Vagina (tissue), 2 donors: ENCODE measurements at regions of chr16 and their contacts with region 1.

Region 1: GRCh38 chr16:26102369-26102768 is 410.6 kb downstream of the HS3ST4 start:
- DNase-seq: no peak
- H3K4me3 ChIP-seq: no peak overlapping the region
- H3K27ac ChIP-seq: no peak overlapping the region
- H3K4me1 ChIP-seq: no peaks in the 10 kb centered on the region
- H3K27me3 ChIP-seq: no peaks in the 10 kb centered on the region
- CTCF ChIP-seq: no peak
- POLR2A ChIP-seq: no peak

Region 2: GRCh38 chr16:26118575-26118974 is 16.2 kb after region 1 on chr16:
- intact Hi-C with region 1: no loop called
- DNase-seq: no peak
- H3K4me3 ChIP-seq: no peak overlapping the region
- H3K27ac ChIP-seq: no peak overlapping the region
- H3K4me1 ChIP-seq: no peaks in the 10 kb centered on the region
- H3K27me3 ChIP-seq: no peaks in the 10 kb centered on the region
- CTCF ChIP-seq: no peak
- POLR2A ChIP-seq: no peak

Region 3: GRCh38 chr16:26157319-26157718 is 55.0 kb after region 1 on chr16:
- intact Hi-C with region 1: loop called (anchors 2 kb)
- DNase-seq: no peak
- H3K4me3 ChIP-seq: no peak overlapping the region
- H3K27ac ChIP-seq: no peak overlapping the region
- H3K4me1 ChIP-seq: no peaks in the 10 kb centered on the region
- H3K27me3 ChIP-seq: no peaks in the 10 kb centered on the region
- CTCF ChIP-seq: no peak
- POLR2A ChIP-seq: no peak